ENCODE measurements at regions of chr14 and their contacts with region 1.

Region 1: GRCh38 chr14:24366721-24367513 is 1.1 kb upstream of the NFATC4 start:
- H3K4me3 ChIP-seq: peak overlapping the region; percentile 39
- H3K27ac ChIP-seq: peak overlapping the region; percentile 97
- H3K4me1 ChIP-seq: peaks cover 12% of the 10 kb centered on the region
- CTCF ChIP-seq: no peak

Region 2: GRCh38 chr14:24179961-24180796 is 186.7 kb before region 1 on chr14:
- CTCF ChIA-PET with region 1: no interaction called
- POLR2A ChIA-PET with region 1: no interaction called
- H3K4me3 ChIP-seq: no peak overlapping the region
- H3K27ac ChIP-seq: no peak overlapping the region; the same call in 1 of the 2 replicates
- H3K4me1 ChIP-seq: no peaks in the 10 kb centered on the region
- CTCF ChIP-seq: no peak

Region 3: GRCh38 chr14:24233538-24233866 is 133.4 kb before region 1 on chr14:
- CTCF ChIA-PET with region 1: no interaction called
- POLR2A ChIA-PET with region 1: no interaction called
- H3K4me3 ChIP-seq: peak overlapping the region; percentile 69
- H3K27ac ChIP-seq: peak overlapping the region; percentile 92; the same call in 1 of the 2 replicates
- H3K4me1 ChIP-seq: peaks cover 7% of the 10 kb centered on the region
- CTCF ChIP-seq: no peak

Region 4: DNA sequence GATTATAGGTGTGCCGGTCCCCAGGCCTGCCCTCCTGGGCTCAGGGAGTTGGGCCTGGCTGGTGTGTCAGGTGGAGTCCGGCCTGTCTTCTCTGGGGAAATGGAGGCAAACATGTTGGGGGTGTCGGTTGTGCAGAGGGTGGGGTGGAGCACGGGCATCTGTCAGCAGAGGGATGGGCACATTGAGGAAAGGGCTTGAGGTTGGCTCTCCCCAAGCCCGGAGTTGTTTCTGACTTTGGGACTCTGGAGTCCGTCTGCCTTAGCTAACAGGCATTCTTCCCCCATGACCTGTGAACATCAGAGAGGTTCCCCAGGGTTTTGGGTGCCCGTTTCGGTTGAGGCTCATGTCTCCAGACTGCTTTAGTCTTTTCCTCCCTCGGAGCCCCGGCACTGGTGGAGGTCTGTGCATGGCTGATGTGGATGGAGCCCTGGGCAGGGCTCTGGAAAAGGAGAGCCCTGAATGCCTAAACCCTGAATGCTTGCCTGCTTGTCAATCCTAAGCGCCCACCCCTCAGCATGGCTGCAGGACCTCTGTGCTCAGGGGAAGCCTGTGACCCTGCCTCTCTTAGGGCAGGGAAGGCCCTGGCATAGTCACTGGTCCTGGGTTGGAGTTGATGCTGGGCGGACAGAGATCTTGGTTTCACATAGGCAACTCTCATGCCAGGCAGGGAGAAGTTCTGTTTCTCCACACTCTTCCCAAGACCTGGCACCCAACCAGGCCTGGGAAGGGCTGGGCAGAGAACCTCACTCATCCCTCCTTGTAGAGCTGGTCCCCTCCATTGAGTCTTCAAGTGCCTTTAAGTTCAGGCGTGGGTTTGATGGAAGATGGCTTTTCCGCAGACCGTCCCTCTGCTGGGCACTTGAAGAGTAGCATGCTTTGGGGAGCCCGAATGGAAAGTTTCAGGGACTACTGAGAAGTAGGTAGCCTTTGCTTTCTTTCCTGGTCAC is 44.8 kb after region 1 on chr14:
- CTCF ChIA-PET with region 1: interaction called, 15 read pairs
- POLR2A ChIA-PET with region 1: interaction called, 3 read pairs
- H3K4me3 ChIP-seq: no peak overlapping the region
- H3K27ac ChIP-seq: no peak overlapping the region
- H3K4me1 ChIP-seq: no peaks in the 10 kb centered on the region
- CTCF ChIP-seq: peak; percentile 42; the same call in 1 of the 2 replicates

Region 5: GRCh38 chr14:24425704-24426103 is 58.8 kb after region 1 on chr14:
- CTCF ChIA-PET with region 1: interaction called, 96 read pairs
- POLR2A ChIA-PET with region 1: interaction called, 45 read pairs
- H3K4me3 ChIP-seq: no peak overlapping the region
- H3K27ac ChIP-seq: no peak overlapping the region
- H3K4me1 ChIP-seq: peaks cover 9% of the 10 kb centered on the region
- CTCF ChIP-seq: no peak

Region 6: DNA sequence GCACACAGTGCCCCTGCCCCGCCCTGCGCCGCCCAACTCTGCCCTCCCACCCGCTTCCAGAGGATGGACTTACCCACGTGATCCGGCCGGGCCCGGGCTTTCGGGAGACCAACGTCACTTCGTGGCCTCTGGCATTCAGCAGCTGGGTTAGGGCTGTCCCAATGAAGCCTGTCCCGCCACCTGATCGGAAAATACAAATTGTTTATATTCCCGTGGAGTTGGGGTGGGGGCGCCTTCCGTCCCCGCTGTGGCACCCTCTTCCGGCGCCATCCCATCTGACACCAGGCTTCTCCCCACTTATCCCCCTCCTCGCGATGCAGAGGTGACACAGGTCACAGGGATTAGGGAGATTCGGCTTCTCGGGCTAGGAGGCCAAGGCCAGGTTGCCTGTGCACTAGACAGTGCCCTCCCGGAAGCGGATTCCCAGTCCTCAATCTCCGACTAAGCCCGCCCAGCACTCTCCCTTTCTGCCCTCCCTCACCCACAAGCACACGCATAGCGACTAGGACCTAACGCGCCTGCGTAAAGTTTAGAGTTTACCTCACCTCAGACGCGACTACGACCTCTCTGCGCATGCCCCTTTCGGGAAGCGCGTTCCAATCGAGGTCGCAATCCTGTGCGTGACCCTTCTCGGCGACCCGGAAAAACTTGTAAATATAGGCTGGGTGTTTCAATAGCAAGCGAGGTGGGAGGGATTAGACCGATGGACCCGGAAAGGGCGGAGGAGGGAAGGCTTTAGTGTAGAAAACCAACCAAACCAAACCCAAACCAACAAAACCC is 75.5 kb after region 1 on chr14 and contains the start of gene SDR39U1:
- CTCF ChIA-PET with region 1: interaction called, 96 read pairs
- POLR2A ChIA-PET with region 1: interaction called, 5 read pairs
- H3K4me3 ChIP-seq: peak within 1 kb of the TSS; percentile 71
- H3K27ac ChIP-seq: peak within 1 kb of the TSS; percentile 93
- H3K4me1 ChIP-seq: peaks cover 8% of the 10 kb centered on the region
- CTCF ChIP-seq: 0 out of 2 replicates have a peak, but pooled peaks have one; percentile 36

Measured in HEK293 (cell line).